PC-3 (cell line): ENCODE measurements at regions of chr17 and their contacts with region 1.

Region 1: DNA sequence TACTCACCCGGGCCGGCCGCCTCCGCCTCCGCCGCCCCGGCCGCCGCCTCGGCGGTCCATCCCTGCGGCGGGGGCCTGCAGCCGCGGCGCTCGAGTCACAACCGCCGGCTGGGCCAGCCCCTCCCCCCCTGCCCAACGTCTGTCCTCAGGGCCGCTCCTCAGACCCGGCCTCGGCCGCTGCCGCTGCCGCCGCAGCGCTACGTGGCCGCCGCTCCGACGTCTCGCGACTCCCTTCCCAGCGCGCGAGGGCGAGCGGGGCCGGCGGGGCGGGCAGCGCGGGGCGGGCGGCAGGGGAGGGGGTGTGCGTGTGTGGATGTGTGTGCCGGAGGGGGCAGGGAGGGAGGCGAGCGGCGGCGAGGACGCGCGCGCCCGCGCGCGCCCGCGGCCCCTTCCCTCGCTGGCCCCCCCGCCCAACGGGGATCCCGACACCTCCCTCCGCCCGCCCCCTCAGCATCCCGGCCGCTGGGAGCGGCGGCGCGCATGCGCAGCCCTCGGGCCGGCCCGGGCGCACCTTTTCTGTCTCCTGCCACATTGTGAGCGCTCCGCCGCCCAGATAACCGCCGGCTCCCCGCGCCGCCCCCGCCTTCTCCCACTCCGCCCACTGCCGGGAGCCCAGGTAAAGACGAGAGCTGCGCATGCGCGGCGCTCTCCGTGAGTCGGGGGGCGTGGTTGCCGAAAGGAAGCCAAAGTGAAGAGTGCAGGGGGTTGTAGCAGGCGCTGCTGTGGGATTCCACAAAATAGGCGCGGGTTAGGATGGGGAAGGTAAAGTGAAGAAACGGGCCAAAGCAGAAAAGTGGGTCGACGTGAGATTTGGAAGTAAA is at the start of gene ZNF652:
- DNase-seq: peak; percentile 99
- ATAC-seq: peak; percentile 72
- H3K4me3 ChIP-seq: peak within 1 kb of the TSS; percentile 93
- H3K27ac ChIP-seq: peak within 1 kb of the TSS; percentile 23
- H3K4me1 ChIP-seq: peaks cover 34% of the 10 kb centered on the region
- H3K27me3 ChIP-seq: no peaks in the 10 kb centered on the region
- CTCF ChIP-seq: no peak
- total RNA-seq, gene ZNF652: 18.2 and 18.5 TPM in 2 replicates

Region 2: DNA sequence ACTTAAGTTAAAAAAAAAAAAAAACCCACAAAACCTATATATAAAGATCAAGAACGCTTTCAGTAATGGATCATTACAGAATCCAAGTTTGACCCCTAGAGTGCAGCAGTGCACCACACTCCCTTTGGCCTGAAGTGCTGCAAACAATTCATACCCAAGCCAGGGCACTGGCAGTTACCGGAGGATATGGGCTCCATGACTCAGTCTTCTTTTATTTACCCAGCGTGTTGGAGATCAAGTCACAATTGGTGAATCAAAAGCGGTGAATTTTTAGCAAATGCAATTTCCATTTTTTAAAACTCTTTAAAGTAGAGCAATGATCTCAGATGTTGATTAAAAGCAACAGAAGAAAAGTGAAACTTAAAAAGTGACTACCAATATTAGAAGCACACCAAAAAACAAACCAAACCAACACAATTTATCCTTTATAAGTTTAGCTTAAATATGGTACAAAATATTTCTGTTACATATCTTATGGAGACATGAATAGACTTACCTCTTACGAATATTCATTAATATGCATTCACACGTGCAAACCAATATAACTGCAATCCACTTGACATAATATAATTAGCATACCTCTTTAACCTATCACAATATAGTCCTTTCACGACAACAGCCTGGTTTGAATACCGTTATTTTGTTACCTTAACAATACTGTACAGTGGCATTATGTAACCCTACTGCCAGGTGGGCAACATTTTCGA is 46.4 kb before region 1 on chr17:
- CTCF ChIA-PET with region 1: no interaction called
- POLR2A ChIA-PET with region 1: no interaction called
- intact Hi-C with region 1: loop called (anchors 1 kb)
- DNase-seq: peak; percentile 98
- ATAC-seq: peak; percentile 96
- H3K4me3 ChIP-seq: peak overlapping the region; percentile 11; the same call in 1 of the 2 replicates
- H3K27ac ChIP-seq: peak overlapping the region; percentile 21
- H3K4me1 ChIP-seq: peaks cover 14% of the 10 kb centered on the region
- H3K27me3 ChIP-seq: no peaks in the 10 kb centered on the region
- CTCF ChIP-seq: peak; percentile 98

Region 3: GRCh38 chr17:49343273-49343672 is 18.8 kb before region 1 on chr17:
- CTCF ChIA-PET with region 1: interaction called, 7 read pairs
- POLR2A ChIA-PET with region 1: no interaction called
- intact Hi-C with region 1: loop called (anchors 2 kb)
- DNase-seq: peak; percentile 15
- ATAC-seq: peak; percentile 29; the same call in 1 of the 2 replicates
- H3K4me3 ChIP-seq: no peak overlapping the region
- H3K27ac ChIP-seq: no peak overlapping the region
- H3K4me1 ChIP-seq: no peaks in the 10 kb centered on the region
- H3K27me3 ChIP-seq: no peaks in the 10 kb centered on the region
- CTCF ChIP-seq: no peak

Region 4: GRCh38 chr17:49390548-49391324 is 28.6 kb after region 1 on chr17:
- CTCF ChIA-PET with region 1: no interaction called
- POLR2A ChIA-PET with region 1: interaction called, 4 read pairs
- intact Hi-C with region 1: loop called (anchors 1 kb)
- DNase-seq: no peak
- ATAC-seq: no peak
- H3K4me3 ChIP-seq: no peak overlapping the region
- H3K27ac ChIP-seq: no peak overlapping the region
- H3K4me1 ChIP-seq: peaks cover 18% of the 10 kb centered on the region
- H3K27me3 ChIP-seq: no peaks in the 10 kb centered on the region
- CTCF ChIP-seq: no peak